Activated CD4-positive, alpha-beta memory T cell treated with anti-CD3 and anti-CD28 coated beads, Interleukin-2, amount 10 ng/mL, durations not matched to agents 7 days and 5 days (primary cell): ENCODE measurements at regions of chr1 and their contacts with region 1.

Region 1: GRCh38 chr1:155978325-155978972 is at the start of gene ARHGEF2:
- DNase-seq: peak; percentile 84
- H3K4me3 Mint-ChIP-seq: peak within 1 kb of the TSS; percentile 100
- H3K27ac Mint-ChIP-seq: peak within 1 kb of the TSS; percentile 93
- H3K4me1 Mint-ChIP-seq: peaks cover 60% of the 10 kb centered on the region
- H3K27me3 Mint-ChIP-seq: no peaks in the 10 kb centered on the region
- total RNA-seq, gene ARHGEF2: 159 to 164 TPM

Region 2: GRCh38 chr1:155940531-155940992 is 37.9 kb before region 1 on chr1:
- CTCF ChIA-PET with region 1: interaction called, 38 read pairs
- POLR2A ChIA-PET with region 1: interaction called, 68 read pairs
- DNase-seq: no peak
- H3K4me3 Mint-ChIP-seq: no peak overlapping the region
- H3K27ac Mint-ChIP-seq: peak overlapping the region; percentile 77
- H3K4me1 Mint-ChIP-seq: peaks cover 57% of the 10 kb centered on the region
- H3K27me3 Mint-ChIP-seq: no peaks in the 10 kb centered on the region

Region 3: DNA sequence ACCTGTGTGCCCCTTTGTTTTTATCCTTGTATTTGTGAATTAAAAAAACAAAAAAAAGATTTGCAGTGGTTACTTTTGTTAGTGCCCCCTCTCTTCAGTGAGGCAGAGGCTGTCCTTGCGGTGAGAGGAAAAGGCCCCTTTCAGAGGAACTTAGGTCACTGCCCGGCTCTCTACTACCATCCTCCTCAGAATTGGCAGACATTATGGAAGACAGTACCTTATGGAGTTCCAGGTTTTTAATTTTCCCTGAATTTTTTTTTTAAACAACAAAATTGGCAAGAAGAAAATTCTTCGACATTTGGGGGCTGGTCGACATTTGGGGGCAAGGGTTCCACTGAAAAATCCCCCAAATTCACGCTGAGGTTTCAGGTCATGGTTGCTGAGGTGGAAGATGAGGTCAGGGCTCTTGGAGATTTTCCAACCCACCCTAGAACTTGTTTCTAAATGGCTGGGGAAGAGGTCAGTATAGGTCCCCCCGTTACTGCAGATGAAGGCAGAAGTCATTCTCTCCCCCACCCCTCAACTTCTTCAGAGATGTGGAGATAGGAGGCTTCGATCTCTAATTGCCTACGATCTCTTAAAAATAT is 31.7 kb before region 1 on chr1:
- CTCF ChIA-PET with region 1: interaction called, 7 read pairs
- POLR2A ChIA-PET with region 1: interaction called, 63 read pairs
- DNase-seq: no peak
- H3K4me3 Mint-ChIP-seq: no peak overlapping the region
- H3K27ac Mint-ChIP-seq: peak overlapping the region; percentile 76
- H3K4me1 Mint-ChIP-seq: peaks cover 48% of the 10 kb centered on the region
- H3K27me3 Mint-ChIP-seq: no peaks in the 10 kb centered on the region

Region 4: DNA sequence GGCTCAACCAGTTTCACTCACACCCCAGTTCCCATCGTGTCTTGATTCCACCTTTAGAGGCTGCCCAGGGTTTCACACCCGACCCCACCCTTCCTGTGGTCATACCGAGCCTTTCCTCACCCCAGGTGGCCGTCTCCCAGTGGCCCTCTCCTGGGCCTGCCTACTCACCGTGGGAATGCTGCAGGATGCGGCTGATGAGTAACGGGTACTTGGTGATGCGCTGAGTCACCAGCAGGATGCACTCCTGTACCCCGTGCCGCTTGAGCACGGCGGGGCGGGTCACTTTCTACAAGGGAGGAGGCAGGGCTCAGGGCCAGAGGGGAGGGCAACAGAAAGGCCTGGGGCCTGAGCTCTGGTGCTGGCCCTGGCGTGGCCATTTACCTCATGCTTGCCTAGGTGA is 16.5 kb before region 1 on chr1:
- CTCF ChIA-PET with region 1: interaction called, 10 read pairs
- POLR2A ChIA-PET with region 1: interaction called, 52 read pairs
- DNase-seq: peak; percentile 62
- H3K4me3 Mint-ChIP-seq: no peak overlapping the region
- H3K27ac Mint-ChIP-seq: peak overlapping the region; percentile 89
- H3K4me1 Mint-ChIP-seq: peaks cover 54% of the 10 kb centered on the region
- H3K27me3 Mint-ChIP-seq: no peaks in the 10 kb centered on the region

Region 5: DNA sequence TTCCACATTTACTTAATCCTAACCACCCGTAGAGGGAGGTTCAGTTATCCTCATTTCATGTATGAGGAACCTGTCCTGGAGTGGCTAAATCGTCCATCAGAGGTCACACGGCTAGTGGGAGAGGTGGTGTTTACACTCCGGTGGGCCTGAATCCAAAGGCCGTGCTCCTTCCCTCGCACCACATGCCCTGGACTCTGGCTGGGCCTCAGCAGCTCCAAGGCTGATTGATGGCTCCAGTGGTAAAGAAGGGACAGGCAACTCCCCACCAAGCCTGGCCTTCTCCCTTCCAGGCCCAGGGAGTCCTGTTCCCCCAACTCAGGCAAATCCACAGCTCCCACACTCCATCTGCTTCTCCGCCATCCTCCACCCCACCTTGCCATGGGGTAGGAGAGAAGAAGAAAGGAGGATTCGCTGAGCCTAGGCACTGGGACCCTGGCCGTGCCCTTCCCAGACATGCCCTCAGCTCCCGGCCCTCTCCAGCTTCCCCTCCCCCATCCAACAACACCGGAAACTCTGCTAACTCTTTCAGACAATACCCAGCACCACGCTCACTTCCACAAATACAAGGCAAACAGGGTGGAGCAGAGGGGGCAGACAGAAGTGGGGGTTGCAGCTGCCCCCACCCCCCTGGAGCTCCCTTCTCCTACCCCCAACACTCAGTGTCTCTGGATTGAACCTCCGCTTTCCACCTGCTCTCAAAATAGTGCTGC is 11.0 kb before region 1 on chr1:
- CTCF ChIA-PET with region 1: interaction called, 10 read pairs
- POLR2A ChIA-PET with region 1: interaction called, 52 read pairs
- DNase-seq: no peak
- H3K4me3 Mint-ChIP-seq: peak overlapping the region; percentile 24
- H3K27ac Mint-ChIP-seq: peak overlapping the region; percentile 87
- H3K4me1 Mint-ChIP-seq: peaks cover 82% of the 10 kb centered on the region
- H3K27me3 Mint-ChIP-seq: no peaks in the 10 kb centered on the region

Region 6: GRCh38 chr1:156136970-156137483 is 158.6 kb after region 1 on chr1:
- CTCF ChIA-PET with region 1: no interaction called
- POLR2A ChIA-PET with region 1: no interaction called
- DNase-seq: no peak
- H3K4me3 Mint-ChIP-seq: no peak overlapping the region
- H3K27ac Mint-ChIP-seq: no peak overlapping the region
- H3K4me1 Mint-ChIP-seq: no peaks in the 10 kb centered on the region
- H3K27me3 Mint-ChIP-seq: no peaks in the 10 kb centered on the region